CD8-positive, alpha-beta T cell (primary cell): ENCODE measurements at regions of chrX and their contacts with region 1.

Region 1: GRCh38 chrX:108070891-108071290 is 20.5 kb downstream of the PSMD10 start:
- DNase-seq: no peak
- ATAC-seq: no peak
- H3K4me3 ChIP-seq: no peak overlapping the region
- H3K4me3 Mint-ChIP-seq: no peak overlapping the region
- H3K27ac ChIP-seq: no peak overlapping the region
- H3K27ac Mint-ChIP-seq: peak overlapping the region; percentile 2
- H3K4me1 ChIP-seq: no peaks in the 10 kb centered on the region
- H3K4me1 Mint-ChIP-seq: peaks cover 3% of the 10 kb centered on the region
- H3K27me3 ChIP-seq: no peaks in the 10 kb centered on the region
- H3K27me3 Mint-ChIP-seq: no peaks in the 10 kb centered on the region
- CTCF ChIP-seq: no peak

Region 2: GRCh38 chrX:106874075-106874474 is 1196.8 kb before region 1 on chrX:
- CTCF ChIA-PET with region 1: no interaction called
- POLR2A ChIA-PET with region 1: no interaction called
- intact Hi-C with region 1: loop called in 1 of 2 experiments (anchors 5 kb)
- DNase-seq: peak in 2 of 9 experiments; percentile 24 to 42
- ATAC-seq: no peak
- H3K4me3 ChIP-seq: no peak overlapping the region
- H3K4me3 Mint-ChIP-seq: no peak overlapping the region
- H3K27ac ChIP-seq: no peak overlapping the region
- H3K27ac Mint-ChIP-seq: no peak overlapping the region
- H3K4me1 ChIP-seq: no peaks in the 10 kb centered on the region
- H3K4me1 Mint-ChIP-seq: no peaks in the 10 kb centered on the region
- H3K27me3 ChIP-seq: no peaks in the 10 kb centered on the region
- H3K27me3 Mint-ChIP-seq: no peaks in the 10 kb centered on the region
- CTCF ChIP-seq: peak; percentile 64

Region 3: GRCh38 chrX:107298266-107298665 is 772.6 kb before region 1 on chrX:
- CTCF ChIA-PET with region 1: no interaction called
- POLR2A ChIA-PET with region 1: no interaction called
- intact Hi-C with region 1: no loop called
- DNase-seq: no peak
- ATAC-seq: no peak
- H3K4me3 ChIP-seq: no peak overlapping the region
- H3K4me3 Mint-ChIP-seq: no peak overlapping the region
- H3K27ac ChIP-seq: no peak overlapping the region
- H3K27ac Mint-ChIP-seq: no peak overlapping the region
- H3K4me1 ChIP-seq: no peaks in the 10 kb centered on the region
- H3K4me1 Mint-ChIP-seq: no peaks in the 10 kb centered on the region
- H3K27me3 ChIP-seq: no peaks in the 10 kb centered on the region
- H3K27me3 Mint-ChIP-seq: peaks cover 14% of the 10 kb centered on the region
- CTCF ChIP-seq: no peak

Region 4: DNA sequence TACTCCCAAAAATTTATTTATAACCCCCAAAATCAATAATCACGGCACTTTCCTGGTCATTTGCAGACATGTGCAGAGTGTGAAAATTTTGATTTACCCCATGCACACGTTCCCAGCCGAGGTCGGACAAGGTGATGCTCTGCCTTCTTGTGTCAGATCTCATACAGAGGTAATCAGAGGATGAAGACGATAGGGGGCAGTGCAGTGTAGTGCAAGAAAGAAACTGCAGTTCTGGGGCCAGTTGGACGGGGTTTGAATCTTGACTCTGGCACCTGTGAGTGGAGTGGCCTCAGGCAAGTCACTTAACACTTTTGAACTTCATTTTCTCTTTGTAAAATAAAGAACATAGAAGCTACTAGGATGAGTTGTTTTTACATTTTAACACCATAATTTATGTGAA is 533.1 kb before region 1 on chrX:
- CTCF ChIA-PET with region 1: no interaction called
- POLR2A ChIA-PET with region 1: no interaction called
- intact Hi-C with region 1: loop called in 1 of 2 experiments (anchors 10 kb)
- DNase-seq: peak in 4 of 9 experiments; percentile 25 to 51 (median 39)
- ATAC-seq: no peak
- H3K4me3 ChIP-seq: no peak overlapping the region
- H3K4me3 Mint-ChIP-seq: no peak overlapping the region
- H3K27ac ChIP-seq: no peak overlapping the region
- H3K27ac Mint-ChIP-seq: no peak overlapping the region
- H3K4me1 ChIP-seq: no peaks in the 10 kb centered on the region
- H3K4me1 Mint-ChIP-seq: no peaks in the 10 kb centered on the region
- H3K27me3 ChIP-seq: no peaks in the 10 kb centered on the region
- H3K27me3 Mint-ChIP-seq: peaks cover 9% of the 10 kb centered on the region
- CTCF ChIP-seq: no peak

Region 5: DNA sequence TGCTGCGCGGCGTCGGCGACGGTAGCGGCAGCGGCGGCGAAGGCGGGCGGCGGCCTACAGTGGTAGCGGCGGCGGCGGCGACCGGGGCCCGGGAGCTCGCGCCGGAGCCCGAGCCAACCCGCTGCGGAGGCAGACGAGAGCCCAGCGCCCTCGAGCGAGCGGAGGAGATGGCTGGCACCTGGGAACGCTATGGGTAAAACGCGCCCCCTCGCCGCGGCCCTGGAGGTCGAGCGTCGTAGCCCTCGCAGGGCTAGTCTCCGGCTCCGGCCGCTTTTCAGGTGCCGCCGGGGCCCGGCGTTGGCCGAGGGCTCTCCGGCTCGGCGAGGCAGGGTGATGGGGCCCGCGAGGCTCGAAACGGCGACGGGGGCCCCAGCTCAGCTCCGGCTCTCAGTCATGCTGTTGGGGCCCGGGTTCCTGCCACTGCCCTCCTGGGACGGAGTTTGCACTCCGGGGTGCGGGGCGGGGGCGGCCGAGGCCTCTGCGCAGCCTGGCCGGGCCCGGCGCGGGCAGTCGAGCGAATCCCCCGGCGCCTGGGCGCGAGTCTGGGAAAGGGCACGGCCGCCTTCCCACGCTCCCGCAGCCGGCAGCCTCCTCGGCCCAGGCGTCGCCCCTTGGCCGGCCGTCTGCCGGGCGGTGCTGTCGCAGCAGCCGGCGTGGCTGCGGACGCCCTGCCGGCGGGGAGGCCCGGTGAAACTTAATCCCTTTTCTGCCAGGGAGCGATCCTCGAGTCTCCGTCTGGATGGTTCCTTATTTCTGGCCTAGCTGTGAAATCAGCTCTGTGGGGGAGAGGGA is 244.5 kb before region 1 on chrX:
- CTCF ChIA-PET with region 1: no interaction called
- POLR2A ChIA-PET with region 1: no interaction called
- intact Hi-C with region 1: loop called in 1 of 2 experiments (anchors 10 kb)
- DNase-seq: peak; percentile 2 to 67 (median 25)
- ATAC-seq: peak; percentile 66
- H3K4me3 ChIP-seq: peak overlapping the region; percentile 52 to 61
- H3K4me3 Mint-ChIP-seq: peak overlapping the region; percentile 89
- H3K27ac ChIP-seq: peak overlapping the region in 1 of 2 experiments; percentile 69
- H3K27ac Mint-ChIP-seq: peak overlapping the region; percentile 86
- H3K4me1 ChIP-seq: peaks cover 25% of the 10 kb centered on the region
- H3K4me1 Mint-ChIP-seq: peaks cover 43% of the 10 kb centered on the region
- H3K27me3 ChIP-seq: no peaks in the 10 kb centered on the region
- H3K27me3 Mint-ChIP-seq: peaks cover 8% of the 10 kb centered on the region
- CTCF ChIP-seq: no peak

Region 6: GRCh38 chrX:107924136-107924746 is 146.7 kb before region 1 on chrX:
- CTCF ChIA-PET with region 1: interaction called, 4 read pairs
- POLR2A ChIA-PET with region 1: no interaction called
- intact Hi-C with region 1: loop called in 1 of 2 experiments (anchors 10 kb)
- DNase-seq: no peak
- ATAC-seq: no peak
- H3K4me3 ChIP-seq: no peak overlapping the region
- H3K4me3 Mint-ChIP-seq: no peak overlapping the region
- H3K27ac ChIP-seq: no peak overlapping the region
- H3K27ac Mint-ChIP-seq: no peak overlapping the region
- H3K4me1 ChIP-seq: no peaks in the 10 kb centered on the region
- H3K4me1 Mint-ChIP-seq: no peaks in the 10 kb centered on the region
- H3K27me3 ChIP-seq: no peaks in the 10 kb centered on the region
- H3K27me3 Mint-ChIP-seq: no peaks in the 10 kb centered on the region
- CTCF ChIP-seq: no peak

Region 7: GRCh38 chrX:109172091-109172602 is 1101.3 kb after region 1 on chrX:
- CTCF ChIA-PET with region 1: no interaction called
- POLR2A ChIA-PET with region 1: no interaction called
- intact Hi-C with region 1: no loop called
- DNase-seq: no peak
- ATAC-seq: no peak
- H3K4me3 ChIP-seq: no peak overlapping the region
- H3K4me3 Mint-ChIP-seq: no peak overlapping the region
- H3K27ac ChIP-seq: no peak overlapping the region
- H3K27ac Mint-ChIP-seq: no peak overlapping the region
- H3K4me1 ChIP-seq: no peaks in the 10 kb centered on the region
- H3K4me1 Mint-ChIP-seq: no peaks in the 10 kb centered on the region
- H3K27me3 ChIP-seq: no peaks in the 10 kb centered on the region
- H3K27me3 Mint-ChIP-seq: no peaks in the 10 kb centered on the region
- CTCF ChIP-seq: no peak